ENCODE measurements at regions of chr2 and their contacts with region 1.

Region 1: DNA sequence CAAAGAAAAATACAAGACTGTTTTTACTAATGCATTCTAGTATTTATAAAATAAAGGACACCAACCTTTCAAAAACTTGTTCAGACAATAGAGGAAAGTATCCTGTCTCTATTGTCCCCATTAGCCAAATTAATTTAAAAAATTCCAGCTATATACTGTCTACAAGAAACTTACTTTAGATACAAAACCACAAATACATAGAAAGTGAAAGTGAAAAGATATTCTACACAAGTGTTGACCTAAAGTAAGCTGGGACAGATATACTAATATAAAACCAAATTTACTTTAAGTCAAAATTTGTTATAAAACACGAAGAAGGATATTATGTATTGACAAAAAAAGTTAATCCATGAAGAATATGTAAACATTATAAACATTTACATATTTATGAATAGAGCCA is 893.3 kb upstream of the TMEFF2 start:
- DNase-seq: no peak
- ATAC-seq: no peak
- H3K4me3 ChIP-seq: no peak overlapping the region
- H3K27ac ChIP-seq: no peak overlapping the region
- H3K4me1 ChIP-seq: no peaks in the 10 kb centered on the region
- H3K27me3 ChIP-seq: no peaks in the 10 kb centered on the region
- CTCF ChIP-seq: no peak

Region 2: GRCh38 chr2:193751299-193751698 is 663.3 kb after region 1 on chr2:
- intact Hi-C with region 1: loop called in 1 of 2 experiments (anchors 5 kb)
- DNase-seq: no peak
- ATAC-seq: no peak
- H3K4me3 ChIP-seq: no peak overlapping the region
- H3K27ac ChIP-seq: no peak overlapping the region
- H3K4me1 ChIP-seq: no peaks in the 10 kb centered on the region
- H3K27me3 ChIP-seq: no peaks in the 10 kb centered on the region
- CTCF ChIP-seq: no peak

Measured in psoas muscle (tissue), 8 donors.